Left lung (tissue), 14 donors: ENCODE measurements at regions of chr5 and their contacts with region 1.

Region 1: GRCh38 chr5:149990518-149991376 is 9.7 kb downstream of the TIGD6 start:
- DNase-seq: peak in 3 of 4 donors; percentile 52 to 82 (median 61)
- ATAC-seq: peak; percentile 99
- H3K4me3 ChIP-seq: no peak overlapping the region
- H3K27ac ChIP-seq: no peak overlapping the region
- H3K4me1 ChIP-seq: no peaks in the 10 kb centered on the region
- H3K27me3 ChIP-seq: no peaks in the 10 kb centered on the region
- CTCF ChIP-seq: peak; percentile 81 to 89

Region 2: GRCh38 chr5:149596713-149597112 is 394.0 kb before region 1 on chr5:
- intact Hi-C with region 1: no loop called
- DNase-seq: no peak
- ATAC-seq: peak; percentile 29
- H3K4me3 ChIP-seq: no peak overlapping the region
- H3K27ac ChIP-seq: peak overlapping the region in 1 of 2 donors; percentile 46
- H3K4me1 ChIP-seq: no peaks in the 10 kb centered on the region
- H3K27me3 ChIP-seq: no peaks in the 10 kb centered on the region
- CTCF ChIP-seq: no peak

Region 3: GRCh38 chr5:149636851-149637246 is 353.9 kb before region 1 on chr5:
- intact Hi-C with region 1: loop called in 1 of 2 experiments (anchors 10 kb)
- DNase-seq: peak; percentile 31 to 86 (median 56)
- ATAC-seq: peak; percentile 77
- H3K4me3 ChIP-seq: no peak overlapping the region
- H3K27ac ChIP-seq: no peak overlapping the region
- H3K4me1 ChIP-seq: peaks cover 0 to 5% of the 10 kb centered on the region in 2 donors
- H3K27me3 ChIP-seq: no peaks in the 10 kb centered on the region
- CTCF ChIP-seq: peak; percentile 80 to 89

Region 4: DNA sequence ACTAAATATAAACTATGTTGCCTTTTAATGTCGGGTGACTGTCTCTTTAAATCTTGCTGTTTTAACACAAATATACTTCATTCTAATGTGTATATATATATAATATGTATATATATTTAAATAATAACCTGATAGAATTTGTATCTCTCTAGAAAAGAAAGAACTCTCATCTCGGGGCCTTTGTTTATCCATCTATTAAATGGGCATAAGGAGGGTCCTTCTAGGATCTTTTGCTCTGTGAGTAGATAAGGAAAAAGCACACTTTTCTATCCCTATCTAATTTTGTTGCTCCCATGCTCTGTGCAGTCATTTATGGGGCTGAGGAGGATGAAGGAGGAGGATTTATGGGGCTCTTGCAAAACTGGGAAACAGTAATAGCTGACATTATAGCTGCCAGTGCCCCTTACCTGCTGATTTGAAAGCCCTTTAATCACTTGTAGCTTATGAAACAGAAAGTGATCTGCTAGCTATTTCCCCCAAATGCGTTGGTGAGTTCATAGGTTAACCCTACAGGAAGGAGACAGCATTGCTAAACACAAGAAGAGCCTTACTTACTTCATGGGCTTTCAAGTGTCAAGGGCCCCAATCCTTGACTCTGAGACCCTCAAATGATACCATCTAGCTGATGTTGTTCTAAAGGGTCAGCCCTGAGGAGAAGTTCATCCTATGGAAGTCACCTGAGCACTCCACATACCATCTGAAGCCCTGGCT is 266.5 kb before region 1 on chr5:
- intact Hi-C with region 1: no loop called
- DNase-seq: no peak
- ATAC-seq: no peak
- H3K4me3 ChIP-seq: no peak overlapping the region
- H3K27ac ChIP-seq: no peak overlapping the region
- H3K4me1 ChIP-seq: no peaks in the 10 kb centered on the region
- H3K27me3 ChIP-seq: no peaks in the 10 kb centered on the region
- CTCF ChIP-seq: no peak

Region 5: DNA sequence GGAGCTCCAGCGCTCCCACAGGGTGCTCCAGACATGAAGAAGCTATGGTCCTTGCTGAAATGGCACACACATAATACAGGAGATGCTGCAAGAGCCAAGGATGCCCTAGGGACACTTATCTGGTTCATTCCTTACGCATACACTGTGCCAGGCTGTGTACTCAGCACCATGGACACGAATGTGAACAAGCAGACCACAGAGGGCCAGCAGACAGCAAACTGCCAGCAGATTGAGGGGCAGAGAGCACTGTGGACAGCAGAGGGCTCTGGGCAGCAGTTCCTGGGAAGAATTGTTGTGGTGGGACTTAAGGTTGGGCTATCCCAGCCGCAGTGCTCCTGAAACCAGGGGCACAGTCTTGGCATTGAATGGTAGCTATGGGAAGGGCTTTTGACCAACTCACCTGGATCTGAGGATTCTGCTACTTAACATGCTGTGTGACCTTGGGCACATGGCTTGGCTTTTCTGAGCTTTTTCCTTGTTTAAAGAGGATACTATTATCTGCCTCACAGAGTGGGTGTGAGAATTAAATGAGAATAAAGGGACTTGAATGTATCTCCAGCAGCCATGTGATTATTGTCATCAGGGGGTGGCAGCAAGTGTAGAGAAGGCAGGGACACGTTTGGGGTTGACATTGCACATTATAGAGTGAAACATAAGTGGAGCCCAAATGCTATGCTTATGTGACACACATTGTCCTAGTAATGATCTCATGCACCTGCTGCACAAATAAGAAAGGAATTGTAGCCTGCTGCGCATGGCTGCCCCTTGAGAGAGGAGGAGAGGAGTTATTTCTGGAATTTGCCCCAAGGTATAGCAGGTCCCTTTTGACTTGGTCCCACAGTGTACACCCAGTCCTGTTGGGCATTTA is 230.5 kb before region 1 on chr5:
- intact Hi-C with region 1: no loop called
- DNase-seq: no peak
- ATAC-seq: no peak
- H3K4me3 ChIP-seq: no peak overlapping the region
- H3K27ac ChIP-seq: no peak overlapping the region
- H3K4me1 ChIP-seq: no peaks in the 10 kb centered on the region
- H3K27me3 ChIP-seq: no peaks in the 10 kb centered on the region
- CTCF ChIP-seq: no peak

Region 6: GRCh38 chr5:149834246-149834855 is 156.4 kb before region 1 on chr5:
- intact Hi-C with region 1: loop called in 1 of 2 experiments (anchors 10 kb)
- DNase-seq: peak in 2 of 4 donors; percentile 74 to 88
- ATAC-seq: peak; percentile 82
- H3K4me3 ChIP-seq: no peak overlapping the region
- H3K27ac ChIP-seq: no peak overlapping the region
- H3K4me1 ChIP-seq: peaks cover 0 to 3% of the 10 kb centered on the region in 2 donors
- H3K27me3 ChIP-seq: no peaks in the 10 kb centered on the region
- CTCF ChIP-seq: peak; percentile 49 to 62

Region 7: GRCh38 chr5:150143350-150144245 is 152.9 kb after region 1 on chr5:
- intact Hi-C with region 1: no loop called
- DNase-seq: peak in 1 of 4 donors; percentile 76
- ATAC-seq: peak; percentile 55
- H3K4me3 ChIP-seq: no peak overlapping the region
- H3K27ac ChIP-seq: peak overlapping the region; percentile 57 to 76
- H3K4me1 ChIP-seq: peaks cover 17 to 31% of the 10 kb centered on the region in 2 donors
- H3K27me3 ChIP-seq: no peaks in the 10 kb centered on the region
- CTCF ChIP-seq: no peak